GM12878 (cell line): ENCODE measurements at regions of chr4 and their contacts with region 1.

Region 1: DNA sequence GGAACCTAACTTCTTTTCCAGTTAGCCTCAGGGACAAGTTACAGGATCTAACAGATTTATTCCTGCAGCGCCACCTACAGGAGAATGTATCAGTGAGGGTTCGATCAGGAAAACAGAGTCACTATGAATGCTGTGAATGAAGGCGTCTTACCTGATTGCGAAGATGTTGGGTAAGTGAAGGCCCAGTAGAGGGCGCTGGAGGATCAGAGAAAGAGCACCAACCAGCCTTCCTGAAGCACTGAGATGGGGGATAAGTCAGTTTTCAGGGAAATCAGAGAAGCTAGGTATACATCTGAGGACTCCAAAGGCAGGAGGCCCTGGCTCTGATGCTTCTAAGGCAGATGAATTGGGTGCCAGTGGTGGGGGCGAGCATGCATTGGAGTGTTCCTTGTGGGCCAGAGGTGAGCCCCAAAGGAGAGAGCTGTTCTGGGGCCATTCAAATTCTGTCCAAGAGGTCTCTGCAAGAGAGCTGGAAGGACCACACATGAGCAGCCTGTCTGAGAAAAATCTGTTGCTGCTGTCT is 169.9 kb upstream of the AADAT start:
- DNase-seq: peak; percentile 65
- ATAC-seq: peak; percentile 99
- H3K4me3 ChIP-seq: no peak overlapping the region
- H3K27ac ChIP-seq: no peak overlapping the region
- H3K4me1 ChIP-seq: no peaks in the 10 kb centered on the region
- H3K27me3 ChIP-seq: 0 out of 4 replicates have a peak, but pooled peaks cover 0 to 2% of the 10 kb centered on the region in 2 experiments
- CTCF ChIP-seq: peak; percentile 88 to 98 (median 97)
- EP300 ChIP-seq: no peak
- POLR2A ChIP-seq: no peak
- RAD21 ChIP-seq: peak; percentile 97

Region 2: GRCh38 chr4:170114636-170115035 is 145.1 kb before region 1 on chr4:
- CTCF ChIA-PET with region 1: no interaction called
- POLR2A ChIA-PET with region 1: no interaction called
- RAD21 ChIA-PET with region 1: no interaction called
- SMC1A ChIA-PET with region 1: no interaction called
- in situ Hi-C with region 1: no loop called
- intact Hi-C with region 1: no loop called
- DNase-seq: no peak
- ATAC-seq: no peak
- H3K4me3 ChIP-seq: no peak overlapping the region
- H3K27ac ChIP-seq: no peak overlapping the region
- H3K4me1 ChIP-seq: no peaks in the 10 kb centered on the region
- H3K27me3 ChIP-seq: no peaks in the 10 kb centered on the region
- CTCF ChIP-seq: no peak
- EP300 ChIP-seq: no peak
- POLR2A ChIP-seq: no peak
- RAD21 ChIP-seq: no peak

Region 3: DNA sequence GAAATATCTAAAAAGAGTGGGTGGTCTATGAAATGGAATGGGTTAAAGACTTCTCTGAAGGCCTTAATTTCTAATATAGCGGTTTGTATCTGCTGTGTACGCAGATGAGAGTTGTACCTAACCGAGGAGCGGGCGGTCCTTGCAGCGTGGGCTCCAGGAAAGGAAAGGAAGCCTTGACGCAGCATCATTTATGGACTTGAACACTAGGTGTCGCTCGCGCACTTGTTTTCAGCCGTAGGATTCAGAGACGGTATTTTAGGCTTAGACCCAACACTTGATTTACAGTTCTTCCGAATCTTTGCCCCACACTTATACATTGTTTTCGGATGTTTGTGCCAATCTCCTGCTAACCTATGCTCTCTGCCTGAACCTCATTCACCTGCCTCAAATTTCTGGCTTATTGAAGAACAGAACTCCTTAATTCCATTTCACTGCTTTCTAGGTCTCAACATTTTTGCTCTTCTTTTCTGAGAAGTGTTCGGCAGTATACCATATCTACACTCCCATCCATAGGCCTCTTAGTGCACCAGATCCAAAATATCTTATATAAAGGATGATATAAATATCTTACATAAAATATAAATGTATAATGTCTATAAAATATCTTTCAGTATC is 121.0 kb before region 1 on chr4:
- CTCF ChIA-PET with region 1: interaction called, 36 read pairs
- POLR2A ChIA-PET with region 1: no interaction called
- RAD21 ChIA-PET with region 1: interaction called, 3 read pairs
- SMC1A ChIA-PET with region 1: interaction called, 7 read pairs
- in situ Hi-C with region 1: loop called (anchors 5 kb)
- intact Hi-C with region 1: loop called (anchors 1 kb)
- DNase-seq: peak; percentile 27
- ATAC-seq: peak; percentile 98
- H3K4me3 ChIP-seq: no peak overlapping the region
- H3K27ac ChIP-seq: no peak overlapping the region
- H3K4me1 ChIP-seq: no peaks in the 10 kb centered on the region
- H3K27me3 ChIP-seq: no peaks in the 10 kb centered on the region; a peak in 1 of 4 replicates
- CTCF ChIP-seq: peak; percentile 74 to 94 (median 79)
- EP300 ChIP-seq: no peak
- POLR2A ChIP-seq: no peak
- RAD21 ChIP-seq: peak; percentile 86

Region 4: DNA sequence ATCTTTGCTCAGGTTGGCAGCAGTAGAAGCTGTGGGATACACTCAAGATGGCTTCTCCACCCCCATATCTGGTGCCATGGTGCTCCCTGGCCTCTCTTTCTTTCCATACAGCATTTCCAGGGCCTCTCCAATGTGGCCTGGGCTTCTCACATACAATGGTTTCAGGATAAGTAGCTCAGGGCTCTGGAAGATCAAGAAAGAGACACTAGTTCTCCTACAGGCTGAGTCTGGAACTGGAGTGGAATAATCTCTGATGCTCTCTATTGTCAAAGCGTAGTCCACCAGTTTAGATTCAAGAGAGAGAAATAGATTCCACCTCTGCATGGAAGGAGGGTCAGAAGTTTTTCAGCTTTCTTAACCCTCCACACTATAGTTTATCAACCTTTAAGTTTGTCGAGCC is 31.8 kb before region 1 on chr4:
- CTCF ChIA-PET with region 1: interaction called, 11 read pairs
- POLR2A ChIA-PET with region 1: no interaction called
- RAD21 ChIA-PET with region 1: interaction called, 3 read pairs
- SMC1A ChIA-PET with region 1: interaction called, 6 read pairs
- in situ Hi-C with region 1: no loop called
- intact Hi-C with region 1: no loop called
- DNase-seq: no peak
- ATAC-seq: no peak
- H3K4me3 ChIP-seq: no peak overlapping the region
- H3K27ac ChIP-seq: no peak overlapping the region
- H3K4me1 ChIP-seq: no peaks in the 10 kb centered on the region
- H3K27me3 ChIP-seq: no peaks in the 10 kb centered on the region
- CTCF ChIP-seq: no peak
- EP300 ChIP-seq: no peak
- POLR2A ChIP-seq: no peak
- RAD21 ChIP-seq: no peak

Region 5: DNA sequence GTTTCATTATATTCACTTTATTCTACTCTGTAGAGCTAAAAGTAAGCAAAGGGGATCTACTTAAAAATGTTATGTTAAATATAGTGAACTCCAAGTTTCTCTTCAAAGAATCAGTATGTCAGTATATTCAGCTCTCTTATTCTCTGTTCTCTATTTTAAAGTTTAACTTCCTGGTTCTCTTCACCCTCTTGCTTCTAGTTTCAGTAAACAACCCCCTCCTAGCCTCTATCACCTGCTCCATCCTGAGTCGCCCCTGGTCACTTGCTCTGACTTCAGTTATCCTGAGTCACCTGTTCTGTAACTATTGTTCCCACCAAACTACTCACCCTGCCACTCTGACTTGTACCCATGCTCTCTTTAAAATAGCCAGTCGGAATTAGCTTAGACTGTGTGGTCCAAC is 10.9 kb after region 1 on chr4:
- CTCF ChIA-PET with region 1: interaction called, 99 read pairs
- POLR2A ChIA-PET with region 1: no interaction called
- RAD21 ChIA-PET with region 1: interaction called, 6 read pairs
- SMC1A ChIA-PET with region 1: interaction called, 36 read pairs
- in situ Hi-C with region 1: no loop called
- intact Hi-C with region 1: no loop called
- DNase-seq: no peak
- ATAC-seq: peak; percentile 72
- H3K4me3 ChIP-seq: no peak overlapping the region
- H3K27ac ChIP-seq: no peak overlapping the region
- H3K4me1 ChIP-seq: no peaks in the 10 kb centered on the region
- H3K27me3 ChIP-seq: no peaks in the 10 kb centered on the region
- CTCF ChIP-seq: no peak
- EP300 ChIP-seq: no peak
- POLR2A ChIP-seq: no peak
- RAD21 ChIP-seq: no peak

Region 6: GRCh38 chr4:170374770-170375169 is 115.1 kb after region 1 on chr4:
- CTCF ChIA-PET with region 1: interaction called, 208 read pairs
- POLR2A ChIA-PET with region 1: no interaction called
- RAD21 ChIA-PET with region 1: interaction called, 78 read pairs
- SMC1A ChIA-PET with region 1: interaction called, 116 read pairs
- in situ Hi-C with region 1: loop called (anchors 5 kb)
- intact Hi-C with region 1: loop called (anchors 1 kb)
- DNase-seq: no peak
- ATAC-seq: peak; percentile 98
- H3K4me3 ChIP-seq: no peak overlapping the region
- H3K27ac ChIP-seq: no peak overlapping the region
- H3K4me1 ChIP-seq: no peaks in the 10 kb centered on the region
- H3K27me3 ChIP-seq: no peaks in the 10 kb centered on the region
- CTCF ChIP-seq: peak; percentile 57 to 84 (median 71)
- EP300 ChIP-seq: no peak
- POLR2A ChIP-seq: no peak
- RAD21 ChIP-seq: peak; percentile 84

Region 7: GRCh38 chr4:170497112-170497511 is 237.4 kb after region 1 on chr4:
- CTCF ChIA-PET with region 1: interaction called, 152 read pairs
- POLR2A ChIA-PET with region 1: no interaction called
- RAD21 ChIA-PET with region 1: interaction called, 102 read pairs
- SMC1A ChIA-PET with region 1: interaction called, 73 read pairs
- in situ Hi-C with region 1: no loop called
- intact Hi-C with region 1: loop called (anchors 1 kb)
- DNase-seq: peak; percentile 24
- ATAC-seq: peak; percentile 94
- H3K4me3 ChIP-seq: peak overlapping the region; percentile 57
- H3K27ac ChIP-seq: no peak overlapping the region
- H3K4me1 ChIP-seq: no peaks in the 10 kb centered on the region
- H3K27me3 ChIP-seq: no peaks in the 10 kb centered on the region
- CTCF ChIP-seq: peak in 1 of 3 experiments; percentile 67; a peak in 2 of 6 replicates
- EP300 ChIP-seq: no peak
- POLR2A ChIP-seq: no peak
- RAD21 ChIP-seq: peak; percentile 28; the same call in 1 of the 2 replicates

Region 8: DNA sequence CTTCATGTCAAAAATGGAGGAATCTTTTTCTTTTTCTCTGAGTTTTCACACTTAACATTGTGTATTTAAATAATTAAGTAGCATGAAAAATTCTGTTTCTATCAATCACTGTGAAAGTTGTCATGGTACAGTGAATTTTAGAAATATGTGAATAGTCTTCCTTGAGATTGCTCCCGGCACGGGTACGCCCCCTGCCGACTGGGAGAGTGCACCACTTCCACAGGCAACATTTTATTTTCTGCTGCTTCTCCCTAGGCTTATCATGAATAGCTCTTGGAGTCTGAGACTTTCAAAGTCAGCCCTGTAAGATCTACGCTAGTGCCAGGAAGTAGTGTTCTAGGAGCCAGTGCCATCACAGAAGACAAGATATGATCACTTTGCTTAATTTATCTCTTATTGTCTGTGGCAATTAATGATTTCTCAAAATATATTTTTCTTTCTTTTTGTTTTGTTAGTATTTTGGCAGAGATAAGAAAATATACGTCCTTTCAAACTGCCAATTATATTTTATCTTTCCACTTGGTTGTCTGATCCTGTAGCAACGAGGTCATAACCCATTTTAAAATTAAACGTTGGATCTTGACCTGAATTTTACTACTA is 593.8 kb after region 1 on chr4:
- CTCF ChIA-PET with region 1: interaction called, 62 read pairs
- POLR2A ChIA-PET with region 1: no interaction called
- RAD21 ChIA-PET with region 1: interaction called, 8 read pairs
- SMC1A ChIA-PET with region 1: interaction called, 41 read pairs
- in situ Hi-C with region 1: loop called (anchors 5 kb)
- intact Hi-C with region 1: loop called (anchors 1 kb)
- DNase-seq: peak; percentile 9
- ATAC-seq: peak; percentile 82
- H3K4me3 ChIP-seq: no peak overlapping the region
- H3K27ac ChIP-seq: no peak overlapping the region
- H3K4me1 ChIP-seq: no peaks in the 10 kb centered on the region
- H3K27me3 ChIP-seq: no peaks in the 10 kb centered on the region
- CTCF ChIP-seq: peak; percentile 76 to 82 (median 82)
- EP300 ChIP-seq: no peak
- POLR2A ChIP-seq: no peak
- RAD21 ChIP-seq: peak; percentile 80

Region 9: GRCh38 chr4:171221181-171221580 is 961.5 kb after region 1 on chr4:
- CTCF ChIA-PET with region 1: no interaction called
- POLR2A ChIA-PET with region 1: no interaction called
- RAD21 ChIA-PET with region 1: no interaction called
- SMC1A ChIA-PET with region 1: no interaction called
- in situ Hi-C with region 1: no loop called
- intact Hi-C with region 1: no loop called
- DNase-seq: no peak
- ATAC-seq: no peak
- H3K4me3 ChIP-seq: no peak overlapping the region
- H3K27ac ChIP-seq: no peak overlapping the region
- H3K4me1 ChIP-seq: no peaks in the 10 kb centered on the region
- H3K27me3 ChIP-seq: no peaks in the 10 kb centered on the region
- CTCF ChIP-seq: no peak
- EP300 ChIP-seq: no peak
- POLR2A ChIP-seq: no peak
- RAD21 ChIP-seq: no peak